Activated T-helper 2 cell treated with anti-CD3 and anti-CD28 coated beads, Interferon-gamma antibody, Interleukin-2, Interleukin-4, amounts not matched to agents 10 μg/mL and 5 μg/mL and 100 μg/mL, durations not matched to agents 14 hours and 24 hours and 36 hours (primary cell): ENCODE measurements at regions of chr2 and their contacts with region 1.

Region 1: DNA sequence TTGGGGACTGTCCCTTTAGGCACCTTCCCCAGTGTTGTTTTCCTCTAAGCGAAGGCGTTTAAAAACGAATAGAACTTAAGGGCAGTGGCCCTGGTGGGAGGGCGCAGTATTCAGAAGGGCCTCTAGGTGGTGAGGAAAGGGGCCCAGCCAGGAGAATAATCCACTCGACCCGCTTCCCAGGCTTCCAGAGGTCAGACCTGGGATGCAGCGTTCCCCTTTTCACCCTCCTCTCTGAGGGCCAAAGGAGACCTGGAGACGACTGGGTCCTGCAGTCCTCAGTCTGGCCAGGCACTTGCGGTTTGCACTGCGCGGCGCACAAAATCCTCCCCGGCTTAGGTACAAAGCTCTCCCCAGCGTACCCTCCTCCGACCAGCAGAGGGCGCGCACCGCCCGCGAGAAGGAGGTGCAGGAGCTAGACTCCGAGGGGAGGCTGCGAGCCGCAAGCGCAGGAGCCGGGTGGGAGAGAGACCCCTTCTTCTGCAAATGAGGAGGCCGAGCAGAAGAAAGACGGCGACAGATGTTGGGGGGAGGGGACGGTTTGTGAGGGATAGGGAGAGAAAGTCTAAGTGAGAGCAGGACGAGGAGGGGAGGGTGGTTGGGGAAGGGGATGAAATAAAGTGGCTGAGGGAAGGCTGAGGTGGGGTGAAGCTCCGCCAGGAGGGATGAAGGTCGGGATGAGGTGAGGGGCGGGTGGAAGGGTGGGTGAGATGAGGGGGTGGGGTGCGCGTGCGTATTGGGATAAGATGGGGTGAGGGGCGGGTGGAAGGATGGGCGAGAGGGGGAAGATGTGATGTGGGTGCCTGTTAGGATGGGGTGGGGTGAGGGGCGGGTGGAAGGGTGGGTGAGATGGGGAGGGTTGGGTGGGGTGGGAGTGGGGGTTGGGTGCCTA is 4.9 kb downstream of the FEV start:
- DNase-seq: peak; percentile 76
- H3K4me3 Mint-ChIP-seq: no peak overlapping the region
- H3K27ac Mint-ChIP-seq: peak overlapping the region; percentile 28
- H3K4me1 Mint-ChIP-seq: peaks cover 9% of the 10 kb centered on the region
- H3K27me3 Mint-ChIP-seq: peaks cover 65% of the 10 kb centered on the region

Region 2: DNA sequence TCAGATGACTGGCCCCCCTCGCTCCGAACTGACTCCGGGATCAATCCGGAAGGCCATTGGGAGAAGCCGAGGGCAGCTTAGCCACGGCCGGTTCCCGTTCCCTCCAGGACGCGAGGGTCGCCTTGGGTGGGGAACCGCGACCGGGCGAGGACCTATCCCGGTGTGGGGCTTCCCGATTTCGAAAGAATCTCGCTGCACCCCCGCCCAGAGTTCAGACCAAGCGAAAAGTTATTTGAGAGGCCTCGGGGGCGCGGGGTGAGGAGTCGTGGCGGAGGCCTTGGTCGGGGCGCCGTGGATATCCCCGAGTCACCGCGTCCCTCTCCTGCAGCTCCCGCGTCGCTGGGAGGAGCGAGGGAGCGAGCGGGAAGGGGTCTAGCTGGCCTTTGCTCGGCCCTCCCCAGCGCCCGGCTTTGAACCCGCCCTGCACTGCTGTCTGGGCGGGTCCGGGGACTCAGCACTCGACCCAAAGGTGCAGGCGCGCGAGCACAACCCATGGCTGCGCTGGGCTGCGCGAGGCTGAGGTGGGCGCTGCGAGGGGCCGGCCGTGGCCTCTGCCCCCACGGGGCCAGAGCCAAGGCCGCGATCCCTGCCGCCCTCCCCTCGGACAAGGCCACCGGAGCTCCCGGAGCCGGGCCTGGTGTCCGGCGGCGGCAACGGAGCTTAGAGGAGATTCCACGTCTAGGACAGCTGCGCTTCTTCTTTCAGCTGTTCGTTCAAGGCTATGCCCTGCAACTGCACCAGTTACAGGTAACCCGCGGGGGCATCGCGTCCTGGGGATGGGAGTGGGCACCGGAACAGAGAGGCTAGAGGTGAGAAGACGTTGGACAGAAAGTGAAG is 198.2 kb before region 1 on chr2 and contains the start of gene CYP27A1:
- intact Hi-C with region 1: loop called (anchors 10 kb)
- DNase-seq: no peak
- H3K4me3 Mint-ChIP-seq: no peak within 1 kb of the TSS
- H3K27ac Mint-ChIP-seq: no peak within 1 kb of the TSS
- H3K4me1 Mint-ChIP-seq: no peaks in the 10 kb centered on the region
- H3K27me3 Mint-ChIP-seq: peaks cover 52% of the 10 kb centered on the region
- total RNA-seq, gene CYP27A1: not detected in 2 replicates

Region 3: GRCh38 chr2:218876562-218877219 is 103.4 kb before region 1 on chr2:
- intact Hi-C with region 1: loop called (anchors 2 kb)
- DNase-seq: peak; percentile 56
- H3K4me3 Mint-ChIP-seq: no peak overlapping the region
- H3K27ac Mint-ChIP-seq: no peak overlapping the region
- H3K4me1 Mint-ChIP-seq: peaks cover 17% of the 10 kb centered on the region
- H3K27me3 Mint-ChIP-seq: peaks cover 68% of the 10 kb centered on the region

Region 4: GRCh38 chr2:218959141-218959731 is 20.9 kb before region 1 on chr2 and contains the start of gene CDK5R2:
- intact Hi-C with region 1: loop called (anchors 1 kb)
- DNase-seq: peak; percentile 58
- H3K4me3 Mint-ChIP-seq: peak within 1 kb of the TSS; percentile 14
- H3K27ac Mint-ChIP-seq: no peak within 1 kb of the TSS
- H3K4me1 Mint-ChIP-seq: no peaks in the 10 kb centered on the region
- H3K27me3 Mint-ChIP-seq: peaks cover 72% of the 10 kb centered on the region
- total RNA-seq, gene CDK5R2: not detected in 2 replicates

Region 5: GRCh38 chr2:219002395-219003266 is 22.5 kb after region 1 on chr2:
- intact Hi-C with region 1: loop called (anchors 2 kb)
- DNase-seq: peak; percentile 22
- H3K4me3 Mint-ChIP-seq: no peak overlapping the region
- H3K27ac Mint-ChIP-seq: no peak overlapping the region
- H3K4me1 Mint-ChIP-seq: peaks cover 4% of the 10 kb centered on the region
- H3K27me3 Mint-ChIP-seq: peaks cover 59% of the 10 kb centered on the region